CD4-positive, alpha-beta memory T cell (primary cell): ENCODE measurements at regions of chr10 and their contacts with region 1.

Region 1: DNA sequence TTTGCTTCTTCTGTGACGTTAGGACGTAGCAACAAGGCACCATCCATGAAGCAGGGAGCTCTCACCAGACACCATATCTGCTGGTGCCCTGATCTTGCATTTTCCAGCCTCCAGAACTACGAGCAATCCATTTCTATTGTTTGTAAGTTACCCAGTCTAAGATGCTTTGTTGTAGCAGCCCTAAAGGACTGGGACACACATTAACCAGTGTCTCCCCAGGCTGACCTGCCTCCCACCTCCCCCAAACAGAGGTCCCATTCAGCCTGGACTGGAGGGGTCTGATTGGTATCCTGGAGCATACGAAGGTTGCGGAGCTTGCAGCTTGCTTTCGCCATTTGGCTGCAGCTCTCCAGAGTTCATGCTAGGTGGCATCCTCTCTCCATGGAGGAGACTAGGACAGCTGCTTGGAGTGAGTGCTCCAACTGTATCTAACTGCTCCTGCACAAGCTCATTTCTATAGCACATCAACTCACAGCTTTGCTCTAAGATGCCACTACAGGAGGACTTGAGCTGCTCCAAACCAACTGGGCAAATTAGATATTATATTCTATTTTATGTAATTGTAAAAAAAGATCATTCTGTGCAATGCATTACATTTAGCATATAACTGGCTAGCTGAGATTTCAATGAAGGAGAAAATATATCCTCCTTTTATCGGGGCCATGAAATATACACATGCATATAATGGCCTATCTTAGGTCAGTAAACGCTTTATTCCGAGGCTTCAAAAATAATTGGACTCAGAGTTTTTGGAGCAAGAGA is 8.0 kb upstream of the GRK5 start:
- DNase-seq: peak in 4 of 5 donors; percentile 34 to 54 (median 50)
- H3K4me3 ChIP-seq: no peak overlapping the region
- H3K4me3 Mint-ChIP-seq: no peak overlapping the region
- H3K27ac ChIP-seq: no peak overlapping the region
- H3K27ac Mint-ChIP-seq: no peak overlapping the region
- H3K4me1 ChIP-seq: no peaks in the 10 kb centered on the region
- H3K4me1 Mint-ChIP-seq: peaks cover 0 to 1% (median 0%) of the 10 kb centered on the region in 4 donors
- H3K27me3 ChIP-seq: no peaks in the 10 kb centered on the region
- H3K27me3 Mint-ChIP-seq: no peaks in the 10 kb centered on the region

Region 2: DNA sequence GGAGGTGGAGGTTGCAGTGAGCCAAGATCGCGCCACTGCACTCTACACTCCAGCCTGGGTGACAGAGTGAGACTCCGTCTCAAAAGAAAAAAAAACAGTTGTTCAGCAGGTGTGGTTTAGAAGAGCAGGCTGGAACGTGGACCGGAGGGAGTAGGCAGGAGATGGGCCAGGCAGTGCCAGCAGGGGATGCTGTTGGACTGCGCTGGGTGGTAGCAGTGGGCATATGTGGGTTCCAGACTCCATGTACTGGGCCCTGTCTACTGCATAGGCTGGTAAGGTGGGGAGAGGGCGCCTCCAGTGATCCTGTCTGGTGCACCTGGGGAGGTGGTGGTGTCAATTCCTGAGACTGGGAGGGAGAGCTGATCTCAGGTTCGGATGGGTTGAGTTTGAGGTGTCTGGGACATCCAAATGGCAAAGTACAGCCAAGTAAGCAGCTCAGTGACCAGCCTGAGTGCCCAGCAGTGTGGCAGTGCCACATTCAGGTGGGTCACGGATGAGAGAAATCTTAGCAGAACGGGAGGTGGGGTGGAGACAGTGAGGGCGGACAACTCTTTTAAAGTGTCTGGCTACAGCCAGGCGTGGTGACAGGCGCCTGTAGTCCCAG is 59.8 kb before region 1 on chr10:
- CTCF ChIA-PET with region 1: interaction called, 5 read pairs
- POLR2A ChIA-PET with region 1: no interaction called
- intact Hi-C with region 1: loop called (anchors 1 kb)
- DNase-seq: peak in 4 of 5 donors; percentile 34 to 45 (median 42)
- H3K4me3 ChIP-seq: no peak overlapping the region
- H3K4me3 Mint-ChIP-seq: no peak overlapping the region
- H3K27ac ChIP-seq: no peak overlapping the region
- H3K27ac Mint-ChIP-seq: peak overlapping the region in 6 of 7 donors; percentile 14 to 88 (median 64)
- H3K4me1 ChIP-seq: peaks cover 4% of the 10 kb centered on the region
- H3K4me1 Mint-ChIP-seq: peaks cover 5 to 10% (median 9%) of the 10 kb centered on the region in 4 donors
- H3K27me3 ChIP-seq: no peaks in the 10 kb centered on the region
- H3K27me3 Mint-ChIP-seq: no peaks in the 10 kb centered on the region

Region 3: GRCh38 chr10:119416855-119417254 is 217.4 kb after region 1 on chr10:
- CTCF ChIA-PET with region 1: interaction called, 34 read pairs
- POLR2A ChIA-PET with region 1: interaction called, 3 read pairs
- intact Hi-C with region 1: loop called (anchors 1 kb)
- DNase-seq: peak; percentile 54 to 65 (median 62)
- H3K4me3 ChIP-seq: no peak overlapping the region
- H3K4me3 Mint-ChIP-seq: no peak overlapping the region
- H3K27ac ChIP-seq: no peak overlapping the region
- H3K27ac Mint-ChIP-seq: peak overlapping the region in 1 of 7 donors; percentile 12
- H3K4me1 ChIP-seq: no peaks in the 10 kb centered on the region
- H3K4me1 Mint-ChIP-seq: peaks cover 0 to 2% (median under 1%) of the 10 kb centered on the region in 4 donors
- H3K27me3 ChIP-seq: no peaks in the 10 kb centered on the region
- H3K27me3 Mint-ChIP-seq: no peaks in the 10 kb centered on the region

Region 4: DNA sequence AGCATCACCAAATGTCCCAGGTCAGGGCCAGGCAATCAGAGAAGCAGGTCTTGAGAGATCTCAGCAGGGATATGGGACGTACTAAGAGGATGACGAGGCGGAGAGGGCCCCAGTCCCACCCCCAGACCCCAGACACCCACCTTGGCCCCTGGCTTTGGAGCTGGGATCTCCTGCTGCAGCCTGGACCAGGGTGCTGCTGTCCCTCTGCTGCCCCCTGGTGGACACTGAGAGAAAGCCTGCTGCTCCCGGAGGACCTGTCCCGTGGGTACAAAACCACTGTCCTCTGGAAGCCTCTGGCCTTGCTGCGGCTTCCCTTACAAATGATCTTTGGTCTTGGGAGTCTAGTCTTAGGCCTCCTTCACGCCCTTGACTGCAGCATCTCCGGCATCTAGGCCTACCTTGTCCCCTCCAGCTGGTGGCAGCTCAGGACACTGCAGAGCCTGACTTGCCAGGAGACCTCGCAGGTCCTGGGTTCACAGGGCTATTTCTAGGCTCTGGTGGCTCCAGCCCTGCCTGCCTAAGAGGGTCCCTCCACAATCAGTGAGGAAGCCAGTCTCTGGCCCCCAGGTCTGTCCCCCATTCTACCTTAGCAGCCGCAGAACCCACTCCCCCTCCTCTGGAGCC is 246.0 kb after region 1 on chr10:
- CTCF ChIA-PET with region 1: interaction called, 59 read pairs
- POLR2A ChIA-PET with region 1: no interaction called
- intact Hi-C with region 1: loop called (anchors 1 kb)
- DNase-seq: peak; percentile 72 to 79 (median 76)
- H3K4me3 ChIP-seq: no peak overlapping the region
- H3K4me3 Mint-ChIP-seq: peak overlapping the region in 1 of 8 donors; percentile 22
- H3K27ac ChIP-seq: no peak overlapping the region
- H3K27ac Mint-ChIP-seq: peak overlapping the region in 3 of 7 donors; percentile 43 to 65 (median 48)
- H3K4me1 ChIP-seq: peaks cover 6% of the 10 kb centered on the region
- H3K4me1 Mint-ChIP-seq: peaks cover 1 to 13% (median 8%) of the 10 kb centered on the region in 4 donors
- H3K27me3 ChIP-seq: no peaks in the 10 kb centered on the region
- H3K27me3 Mint-ChIP-seq: no peaks in the 10 kb centered on the region

Region 5: DNA sequence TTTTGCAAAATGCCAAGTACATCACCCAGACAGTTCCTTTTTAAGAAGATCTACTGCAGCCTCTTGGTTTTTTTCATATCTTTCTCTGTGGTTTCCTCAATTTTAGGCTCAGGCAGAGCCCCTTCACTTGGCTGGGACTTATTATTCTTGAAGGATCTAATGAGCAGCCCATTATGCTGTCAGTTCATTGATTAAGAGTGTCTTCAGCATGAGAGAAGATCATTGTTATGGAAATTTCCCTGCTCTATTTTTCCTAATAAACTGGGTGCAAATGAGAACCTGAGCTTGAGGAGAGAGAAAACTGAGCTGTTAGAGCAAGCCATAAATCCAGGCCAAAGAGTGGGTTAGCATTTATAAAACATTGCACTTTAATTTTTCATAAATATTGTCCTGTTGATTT is 839.6 kb after region 1 on chr10:
- CTCF ChIA-PET with region 1: no interaction called
- POLR2A ChIA-PET with region 1: no interaction called
- intact Hi-C with region 1: no loop called
- DNase-seq: no peak
- H3K4me3 ChIP-seq: no peak overlapping the region
- H3K4me3 Mint-ChIP-seq: no peak overlapping the region
- H3K27ac ChIP-seq: no peak overlapping the region
- H3K27ac Mint-ChIP-seq: no peak overlapping the region
- H3K4me1 ChIP-seq: no peaks in the 10 kb centered on the region
- H3K4me1 Mint-ChIP-seq: no peaks in the 10 kb centered on the region
- H3K27me3 ChIP-seq: no peaks in the 10 kb centered on the region
- H3K27me3 Mint-ChIP-seq: peaks cover 1 to 2% of the 10 kb centered on the region in 2 donors